ENCODE measurements at regions of chr1 and their contacts with region 1.

Region 1: GRCh38 chr1:58546520-58547308 is at the start of gene OMA1:
- DNase-seq: peak; percentile 98
- ATAC-seq: peak; percentile 97
- H3K4me3 Mint-ChIP-seq: peak within 1 kb of the TSS; percentile 93
- H3K27ac Mint-ChIP-seq: peak within 1 kb of the TSS; percentile 92
- H3K4me1 Mint-ChIP-seq: peaks cover 24% of the 10 kb centered on the region
- H3K27me3 Mint-ChIP-seq: peaks cover 5% of the 10 kb centered on the region
- total RNA-seq, gene OMA1: 24.9 to 26.0 TPM

Region 2: DNA sequence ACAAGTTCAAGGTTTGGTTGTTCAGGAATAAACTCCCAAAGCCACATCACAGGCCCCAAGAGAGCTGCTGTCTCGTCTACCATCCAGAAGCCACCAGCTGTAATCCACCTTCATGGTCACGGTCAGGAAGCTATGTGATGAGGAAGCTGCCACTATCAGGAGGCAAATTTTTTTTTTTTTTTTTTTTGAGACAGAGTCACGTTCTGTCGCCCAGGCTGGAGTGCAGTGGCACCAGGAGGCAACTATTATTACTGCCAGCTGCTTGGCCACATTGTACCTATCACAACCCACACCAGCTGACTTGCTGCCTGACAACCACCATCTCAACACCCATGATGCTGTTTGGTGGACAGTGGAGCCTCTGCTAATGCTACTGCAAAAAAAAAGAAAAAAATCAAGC is 124.3 kb before region 1 on chr1:
- CTCF ChIA-PET with region 1: no interaction called
- DNase-seq: no peak
- ATAC-seq: no peak
- H3K4me3 Mint-ChIP-seq: no peak overlapping the region
- H3K27ac Mint-ChIP-seq: no peak overlapping the region
- H3K4me1 Mint-ChIP-seq: no peaks in the 10 kb centered on the region
- H3K27me3 Mint-ChIP-seq: no peaks in the 10 kb centered on the region

Region 3: DNA sequence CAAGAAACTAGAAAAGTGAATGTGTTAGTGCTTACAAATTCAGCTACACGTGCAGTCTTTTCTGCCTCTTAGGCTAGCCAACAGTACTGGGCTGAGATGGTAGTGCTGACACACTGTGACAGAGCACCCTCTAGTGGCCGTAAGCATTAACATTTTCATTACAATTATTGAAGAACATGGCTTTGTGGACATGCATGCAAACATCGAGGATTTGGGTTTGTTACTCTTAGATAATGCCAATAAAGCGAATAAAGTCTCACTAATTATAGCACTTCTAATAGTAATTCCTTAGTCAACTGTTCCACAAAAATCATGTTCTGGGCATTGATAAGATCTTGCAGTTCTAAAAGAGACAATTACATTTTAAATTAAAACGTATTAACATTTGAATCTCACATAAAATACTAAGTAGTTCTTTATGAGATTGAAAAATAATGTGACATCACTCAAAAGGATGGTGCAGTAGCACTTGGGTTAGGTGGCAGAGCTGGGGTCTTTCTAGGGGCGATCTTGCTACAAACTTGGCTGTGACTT is 106.0 kb after region 1 on chr1:
- CTCF ChIA-PET with region 1: interaction called, 21 read pairs
- DNase-seq: peak; percentile 72
- ATAC-seq: peak; percentile 92
- H3K4me3 Mint-ChIP-seq: no peak overlapping the region
- H3K27ac Mint-ChIP-seq: no peak overlapping the region
- H3K4me1 Mint-ChIP-seq: peaks cover 16% of the 10 kb centered on the region
- H3K27me3 Mint-ChIP-seq: no peaks in the 10 kb centered on the region